ENCODE measurements at regions of chr11 and their contacts with region 1.

Region 1: GRCh38 chr11:6531267-6531752 is 34.2 kb downstream of the DNHD1 start:
- DNase-seq: no peak
- H3K4me3 ChIP-seq: no peak overlapping the region
- H3K27ac ChIP-seq: no peak overlapping the region; the same call in 1 of the 2 replicates
- H3K4me1 ChIP-seq: no peaks in the 10 kb centered on the region
- H3K27me3 ChIP-seq: no peaks in the 10 kb centered on the region
- CTCF ChIP-seq: peak in 2 of 3 experiments; percentile 76 to 80; a peak in 3 of 4 replicates
- EP300 ChIP-seq: no peak
- POLR2A ChIP-seq: no peak
- RAD21 ChIP-seq: peak; percentile 81 to 84

Region 2: DNA sequence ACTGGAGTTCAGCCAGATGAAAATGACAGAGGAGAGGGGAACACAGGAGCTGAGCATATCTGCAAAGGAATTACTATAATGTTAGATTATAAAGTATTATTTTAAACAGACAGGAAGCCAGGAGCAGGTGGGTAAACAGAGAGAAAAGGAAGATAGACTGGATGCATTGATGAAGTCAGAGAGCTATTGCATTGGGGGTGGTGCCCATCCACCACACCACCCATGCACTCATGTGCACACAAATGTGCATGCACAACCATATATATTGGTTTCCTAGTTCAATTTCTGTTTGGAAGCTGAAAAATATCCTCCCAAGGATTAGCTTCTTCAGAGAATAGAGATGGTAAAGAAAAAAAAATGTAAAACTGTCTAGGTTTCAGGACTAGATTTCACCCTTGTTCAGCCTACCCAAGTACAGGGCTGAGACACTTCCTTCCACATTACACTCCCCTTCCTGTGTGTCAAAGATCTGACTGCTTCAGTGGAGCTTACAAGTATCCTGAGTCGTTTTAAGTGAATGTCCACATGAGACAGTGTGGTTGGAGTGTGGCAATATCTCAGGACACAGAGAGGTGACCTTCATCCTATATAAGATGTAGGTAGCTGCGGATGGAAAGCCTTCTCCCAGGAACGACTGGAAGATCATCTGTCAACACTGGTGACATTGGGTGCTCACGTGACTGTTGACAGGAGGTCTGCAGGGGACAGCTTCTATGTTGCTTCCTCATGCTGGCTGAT is 153.2 kb before region 1 on chr11:
- CTCF ChIA-PET with region 1: interaction called, 20 read pairs
- POLR2A ChIA-PET with region 1: no interaction called
- DNase-seq: no peak
- H3K4me3 ChIP-seq: no peak overlapping the region
- H3K27ac ChIP-seq: no peak overlapping the region
- H3K4me1 ChIP-seq: peaks cover 0 to 9% (median 7%) of the 10 kb centered on the region in 4 experiments; a peak in 4 of 7 replicates
- H3K27me3 ChIP-seq: no peaks in the 10 kb centered on the region
- CTCF ChIP-seq: no peak
- EP300 ChIP-seq: no peak
- POLR2A ChIP-seq: no peak
- RAD21 ChIP-seq: no peak

Region 3: DNA sequence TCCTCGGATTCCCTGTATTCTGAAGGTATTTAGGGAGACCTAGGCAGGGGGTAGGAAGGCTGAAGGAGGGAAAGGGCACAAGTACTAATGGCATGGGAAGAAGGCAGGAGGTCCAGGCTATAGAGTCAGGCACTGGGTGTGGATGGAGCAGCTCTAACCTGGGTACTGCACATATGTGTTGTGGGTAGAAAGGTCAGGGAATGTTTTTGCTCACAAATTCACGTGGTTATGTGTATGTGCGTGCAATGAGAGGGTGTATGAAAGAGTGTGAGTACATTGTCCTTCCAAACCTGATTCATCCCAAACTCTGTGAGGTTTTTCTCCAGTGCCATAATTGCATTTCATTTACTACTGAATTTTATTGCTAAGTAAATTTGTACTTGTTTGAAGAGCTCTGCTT is 11.0 kb before region 1 on chr11:
- CTCF ChIA-PET with region 1: interaction called, 22 read pairs
- POLR2A ChIA-PET with region 1: interaction called, 4 read pairs
- DNase-seq: no peak
- H3K4me3 ChIP-seq: no peak overlapping the region
- H3K27ac ChIP-seq: no peak overlapping the region
- H3K4me1 ChIP-seq: no peaks in the 10 kb centered on the region
- H3K27me3 ChIP-seq: no peaks in the 10 kb centered on the region
- CTCF ChIP-seq: no peak
- EP300 ChIP-seq: no peak
- POLR2A ChIP-seq: no peak
- RAD21 ChIP-seq: no peak

Region 4: DNA sequence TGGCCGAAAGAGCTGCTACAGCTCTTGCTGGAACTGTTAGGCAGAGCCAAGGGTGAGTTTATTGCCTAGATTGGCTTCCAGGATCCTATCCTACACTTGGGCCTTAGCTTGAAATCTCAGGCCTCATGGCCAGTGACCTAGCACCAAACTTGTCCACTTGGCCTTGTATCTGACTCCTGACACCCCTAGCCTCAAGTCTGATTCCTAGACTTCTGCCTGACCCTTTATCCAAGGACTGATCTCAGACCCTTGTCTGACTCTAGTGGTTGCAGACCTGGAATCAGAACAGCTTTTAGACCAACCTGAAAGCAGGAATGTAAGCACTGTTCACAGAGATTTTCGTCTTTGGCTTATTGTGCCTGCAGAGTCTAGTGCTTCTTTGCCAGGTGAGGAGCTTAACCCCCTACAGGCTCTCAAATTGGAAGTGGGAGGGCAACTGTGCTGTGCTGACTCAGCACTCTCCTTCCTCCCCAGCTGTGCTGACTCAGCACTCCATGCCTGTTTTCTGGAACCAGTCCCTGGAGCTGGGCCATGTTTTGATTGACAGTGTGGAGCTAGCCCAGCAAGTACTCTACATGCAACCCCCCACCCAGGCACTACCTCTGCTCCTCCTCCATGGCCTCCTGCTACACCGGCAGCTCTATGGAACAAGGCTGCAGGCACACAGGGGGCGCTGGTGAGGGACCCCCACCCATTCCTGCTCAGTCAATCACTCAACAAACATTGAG is 37.0 kb after region 1 on chr11:
- CTCF ChIA-PET with region 1: interaction called, 63 read pairs
- POLR2A ChIA-PET with region 1: no interaction called
- DNase-seq: peak in 1 of 2 experiments; percentile 65
- H3K4me3 ChIP-seq: no peak overlapping the region
- H3K27ac ChIP-seq: no peak overlapping the region
- H3K4me1 ChIP-seq: peaks cover 0 to 9% (median 4%) of the 10 kb centered on the region in 4 experiments; a peak in 5 of 7 replicates
- H3K27me3 ChIP-seq: no peaks in the 10 kb centered on the region
- CTCF ChIP-seq: peak; percentile 35 to 68 (median 60)
- EP300 ChIP-seq: no peak
- POLR2A ChIP-seq: no peak
- RAD21 ChIP-seq: peak; percentile 6 to 23; a peak in 2 of 4 replicates

Region 5: DNA sequence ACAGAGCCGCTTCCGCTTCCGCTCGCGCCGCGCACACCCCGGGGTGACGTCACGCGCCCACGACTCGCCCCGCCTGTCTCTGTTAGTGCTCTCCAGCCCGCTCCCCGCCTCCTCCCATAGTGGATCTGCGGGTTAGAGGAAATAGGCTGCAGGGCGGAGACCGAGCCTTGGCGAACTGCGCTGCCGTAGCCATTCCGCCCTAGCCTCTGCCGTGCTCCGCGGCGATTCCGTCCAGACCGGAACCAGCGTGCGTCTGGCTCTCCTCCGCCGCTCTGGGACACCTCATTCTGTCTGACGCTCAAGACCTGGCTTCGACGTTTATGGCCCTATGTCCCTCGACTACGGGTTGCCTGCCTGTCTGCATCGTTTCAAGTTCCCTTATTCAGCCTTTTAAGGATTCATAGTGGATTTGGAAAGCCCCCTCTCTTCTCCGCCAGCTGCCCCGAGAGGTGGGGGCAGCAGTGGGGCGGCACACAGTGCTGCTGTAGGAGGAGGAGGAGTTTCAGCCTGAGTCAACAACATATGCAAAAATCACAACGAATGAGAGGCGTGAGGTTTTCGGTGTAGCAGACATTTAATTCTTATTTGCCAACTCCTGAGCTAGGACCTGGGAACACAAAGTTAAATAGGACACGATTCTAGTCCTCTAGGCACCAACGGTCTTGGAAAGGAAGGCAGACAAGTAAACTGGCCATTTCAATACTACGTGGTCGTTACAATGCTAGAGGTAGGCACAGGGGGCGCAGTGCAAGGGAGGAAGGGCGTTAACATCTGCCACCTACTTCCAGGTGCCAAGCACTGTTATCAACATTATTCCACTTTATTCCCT is 81.1 kb after region 1 on chr11 and contains the start of gene TAF10:
- CTCF ChIA-PET with region 1: interaction called, 10 read pairs
- POLR2A ChIA-PET with region 1: interaction called, 5 read pairs
- DNase-seq: peak in 1 of 2 experiments; percentile 92
- H3K4me3 ChIP-seq: peak within 1 kb of the TSS; percentile 67 to 85 (median 76)
- H3K27ac ChIP-seq: peak within 1 kb of the TSS; percentile 94
- H3K4me1 ChIP-seq: peaks cover 0 to 11% (median 5%) of the 10 kb centered on the region in 4 experiments; a peak in 6 of 7 replicates
- H3K27me3 ChIP-seq: no peaks in the 10 kb centered on the region
- CTCF ChIP-seq: peak; percentile 70 to 87 (median 83)
- EP300 ChIP-seq: no peak
- POLR2A ChIP-seq: peak; percentile 75 to 92
- RAD21 ChIP-seq: peak; percentile 41 to 50
- total RNA-seq, gene TAF10: 128 and 153 TPM in 2 replicates

Region 6: GRCh38 chr11:6705905-6706535 is 174.7 kb after region 1 on chr11:
- CTCF ChIA-PET with region 1: interaction called, 35 read pairs
- POLR2A ChIA-PET with region 1: no interaction called
- DNase-seq: peak in 1 of 2 experiments; percentile 64
- H3K4me3 ChIP-seq: no peak overlapping the region
- H3K27ac ChIP-seq: no peak overlapping the region
- H3K4me1 ChIP-seq: no peaks in the 10 kb centered on the region
- H3K27me3 ChIP-seq: peaks cover 0 to 2% (median 0%) of the 10 kb centered on the region in 4 experiments; a peak in 1 of 7 replicates
- CTCF ChIP-seq: peak in 2 of 3 experiments; percentile 77 to 80; a peak in 3 of 4 replicates
- EP300 ChIP-seq: no peak
- POLR2A ChIP-seq: no peak
- RAD21 ChIP-seq: peak; percentile 64 to 71

Region 7: GRCh38 chr11:7031471-7031871 is 500.2 kb after region 1 on chr11:
- CTCF ChIA-PET with region 1: no interaction called
- POLR2A ChIA-PET with region 1: no interaction called
- DNase-seq: no peak
- H3K4me3 ChIP-seq: no peak overlapping the region
- H3K27ac ChIP-seq: no peak overlapping the region
- H3K4me1 ChIP-seq: no peaks in the 10 kb centered on the region
- H3K27me3 ChIP-seq: no peaks in the 10 kb centered on the region; a peak in 1 of 7 replicates
- CTCF ChIP-seq: no peak
- EP300 ChIP-seq: no peak
- POLR2A ChIP-seq: no peak
- RAD21 ChIP-seq: no peak

Measured in H1 (cell line).